Body of pancreas (tissue), 4 donors: ENCODE measurements at regions of chr12 and their contacts with region 1.

Region 1: GRCh38 chr12:41264281-41264680 is 76.2 kb downstream of the PDZRN4 start:
- DNase-seq: no peak
- ATAC-seq: no peak
- H3K4me3 ChIP-seq: no peak overlapping the region
- H3K27ac ChIP-seq: no peak overlapping the region
- H3K4me1 ChIP-seq: no peaks in the 10 kb centered on the region
- H3K27me3 ChIP-seq: no peaks in the 10 kb centered on the region
- CTCF ChIP-seq: peak in 6 of 7 experiments; percentile 15 to 47 (median 44)
- POLR2A ChIP-seq: no peak

Region 2: DNA sequence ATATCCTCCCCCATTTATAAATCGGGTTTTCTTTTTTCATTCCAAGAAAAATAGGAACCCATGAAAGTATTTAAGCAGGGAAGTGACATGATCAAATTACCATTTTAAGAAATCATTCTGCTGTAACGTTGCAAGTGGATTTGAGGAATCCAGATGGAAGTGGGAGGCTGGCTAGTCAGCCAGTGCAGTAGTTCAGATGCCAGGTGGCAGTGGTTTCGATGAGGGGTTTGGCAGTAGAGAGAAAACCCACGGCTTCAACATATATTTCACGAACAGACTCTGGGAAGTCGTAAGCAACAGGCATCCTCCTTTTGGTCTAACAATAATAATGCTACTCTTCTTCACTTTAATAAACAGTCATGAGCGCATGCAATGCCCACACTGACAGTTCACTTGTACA is 51.2 kb before region 1 on chr12:
- intact Hi-C with region 1: no loop called
- DNase-seq: no peak
- ATAC-seq: no peak
- H3K4me3 ChIP-seq: no peak overlapping the region
- H3K27ac ChIP-seq: no peak overlapping the region
- H3K4me1 ChIP-seq: no peaks in the 10 kb centered on the region
- H3K27me3 ChIP-seq: no peaks in the 10 kb centered on the region
- CTCF ChIP-seq: no peak
- POLR2A ChIP-seq: no peak

Region 3: DNA sequence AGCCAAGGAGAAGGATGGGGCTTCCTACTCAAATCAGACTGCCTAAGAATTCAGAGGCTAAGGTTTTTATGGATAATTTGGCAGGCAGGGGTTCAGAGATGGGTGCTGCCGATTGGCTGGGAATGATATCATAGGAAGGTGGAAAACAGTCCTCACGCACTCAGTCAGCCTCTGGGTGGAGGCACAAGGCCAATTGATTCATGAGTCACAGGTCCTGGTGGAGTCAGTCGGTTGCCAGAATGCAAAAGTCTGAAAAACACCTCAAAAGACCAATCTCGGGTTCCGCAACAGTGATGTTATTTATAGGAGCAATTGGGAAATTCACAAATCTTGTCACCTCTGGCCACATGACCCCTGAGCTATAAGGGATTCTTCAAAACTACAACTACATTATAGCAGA is 774.9 kb after region 1 on chr12:
- intact Hi-C with region 1: loop called (anchors 10 kb)
- DNase-seq: no peak
- ATAC-seq: no peak
- H3K4me3 ChIP-seq: no peak overlapping the region
- H3K27ac ChIP-seq: no peak overlapping the region
- H3K4me1 ChIP-seq: no peaks in the 10 kb centered on the region
- H3K27me3 ChIP-seq: no peaks in the 10 kb centered on the region
- CTCF ChIP-seq: no peak
- POLR2A ChIP-seq: no peak